ENCODE measurements at regions of chr17 and their contacts with region 1.

Region 1: GRCh38 chr17:41347869-41348773 is 2.5 kb downstream of the KRT33A start:
- DNase-seq: peak; percentile 61
- H3K4me3 ChIP-seq: no peak overlapping the region
- H3K27ac ChIP-seq: no peak overlapping the region
- H3K4me1 ChIP-seq: peaks cover 9% of the 10 kb centered on the region
- H3K27me3 ChIP-seq: no peaks in the 10 kb centered on the region
- CTCF ChIP-seq: peak in 1 of 2 donors; percentile 7

Region 2: GRCh38 chr17:41406205-41406604 is 58.1 kb after region 1 on chr17:
- CTCF ChIA-PET with region 1: no interaction called
- dilution Hi-C with region 1: no loop called
- in situ Hi-C with region 1: no loop called
- intact Hi-C with region 1: no loop called
- DNase-seq: peak; percentile 67
- H3K4me3 ChIP-seq: no peak overlapping the region
- H3K27ac ChIP-seq: no peak overlapping the region
- H3K4me1 ChIP-seq: peaks cover 32% of the 10 kb centered on the region
- H3K27me3 ChIP-seq: no peaks in the 10 kb centered on the region
- CTCF ChIP-seq: peak; percentile 36 to 67

Region 3: GRCh38 chr17:41456208-41456607 is 108.1 kb after region 1 on chr17:
- CTCF ChIA-PET with region 1: no interaction called
- dilution Hi-C with region 1: loop called (anchors 5 kb)
- in situ Hi-C with region 1: no loop called
- intact Hi-C with region 1: no loop called
- DNase-seq: no peak
- H3K4me3 ChIP-seq: no peak overlapping the region
- H3K27ac ChIP-seq: no peak overlapping the region
- H3K4me1 ChIP-seq: peaks cover 8% of the 10 kb centered on the region
- H3K27me3 ChIP-seq: no peaks in the 10 kb centered on the region
- CTCF ChIP-seq: peak in 1 of 2 donors; percentile 50

Region 4: DNA sequence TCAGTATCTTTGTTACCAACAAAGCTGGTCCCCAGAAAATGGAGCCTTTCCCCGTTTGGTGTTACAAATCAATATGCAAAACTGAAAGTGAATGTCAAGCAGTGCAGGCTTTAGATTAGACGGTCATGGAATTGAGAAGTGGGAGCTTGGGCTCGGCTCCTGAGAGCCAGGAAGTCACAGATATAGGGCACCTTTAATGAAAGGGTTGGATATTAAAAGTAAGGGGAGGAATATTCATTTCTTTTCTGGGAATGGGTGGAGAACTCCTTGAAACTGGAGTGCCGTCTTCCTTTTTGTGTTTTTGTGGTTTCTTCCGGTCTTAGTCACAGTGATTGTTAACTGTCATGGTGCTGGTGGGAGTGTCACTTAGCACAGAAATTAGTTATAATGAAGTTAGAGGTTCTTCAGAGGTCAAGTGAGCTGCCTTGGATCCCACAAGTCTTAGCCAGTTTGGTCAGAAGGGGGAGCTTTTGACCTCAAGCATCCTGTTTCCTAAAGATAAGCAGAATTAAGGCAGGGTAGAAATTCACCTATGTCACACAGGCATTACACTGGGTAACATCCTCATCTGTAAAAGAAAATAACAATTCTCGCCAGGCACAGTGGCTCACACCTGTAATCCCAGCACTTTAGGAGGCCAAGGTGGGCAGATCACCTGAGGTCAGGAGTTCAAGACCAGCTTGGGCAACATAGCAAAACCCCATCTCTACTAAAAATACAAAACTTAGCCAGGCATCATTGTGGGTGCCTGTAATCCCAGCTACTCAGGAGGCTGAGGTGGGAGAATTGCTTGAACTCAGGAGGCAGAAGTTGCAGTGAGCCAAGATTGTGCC is 331.0 kb after region 1 on chr17:
- CTCF ChIA-PET with region 1: no interaction called
- dilution Hi-C with region 1: loop called (anchors 5 kb)
- in situ Hi-C with region 1: no loop called
- intact Hi-C with region 1: no loop called
- DNase-seq: peak; percentile 77
- H3K4me3 ChIP-seq: peak overlapping the region; percentile 1 to 23 (median 16)
- H3K27ac ChIP-seq: peak overlapping the region; percentile 78
- H3K4me1 ChIP-seq: peaks cover 12% of the 10 kb centered on the region
- H3K27me3 ChIP-seq: no peaks in the 10 kb centered on the region
- CTCF ChIP-seq: peak; percentile 8 to 35

Measured in mammary epithelial cell (primary cell).